T-cell (primary cell): ENCODE measurements at regions of chr10 and their contacts with region 1.

Region 1: GRCh38 chr10:71569775-71570588 is 149.6 kb downstream of the C10orf105 start:
- DNase-seq: peak; percentile 28 to 81 (median 67)
- ATAC-seq: peak in 2 of 4 experiments; percentile 60 to 65
- H3K4me3 ChIP-seq: no peak overlapping the region
- H3K4me3 Mint-ChIP-seq: no peak overlapping the region
- H3K27ac ChIP-seq: no peak overlapping the region
- H3K27ac Mint-ChIP-seq: no peak overlapping the region
- H3K4me1 ChIP-seq: no peaks in the 10 kb centered on the region
- H3K4me1 Mint-ChIP-seq: no peaks in the 10 kb centered on the region
- H3K27me3 ChIP-seq: peaks cover 0 to 14% of the 10 kb centered on the region in 2 experiments
- H3K27me3 Mint-ChIP-seq: no peaks in the 10 kb centered on the region

Region 2: GRCh38 chr10:71314028-71314693 is 255.8 kb before region 1 on chr10:
- CTCF ChIA-PET with region 1: interaction called, 10 to 12 read pairs
- POLR2A ChIA-PET with region 1: no interaction called
- DNase-seq: peak in 32 of 35 experiments; percentile 20 to 82 (median 42)
- ATAC-seq: peak; percentile 33 to 42 (median 39)
- H3K4me3 ChIP-seq: no peak overlapping the region
- H3K4me3 Mint-ChIP-seq: no peak overlapping the region
- H3K27ac ChIP-seq: no peak overlapping the region
- H3K27ac Mint-ChIP-seq: no peak overlapping the region
- H3K4me1 ChIP-seq: peaks cover 0 to 15% of the 10 kb centered on the region in 2 experiments
- H3K4me1 Mint-ChIP-seq: peaks cover 0 to 12% (median 6%) of the 10 kb centered on the region in 3 donors
- H3K27me3 ChIP-seq: peaks cover 0 to 9% of the 10 kb centered on the region in 2 experiments
- H3K27me3 Mint-ChIP-seq: peaks cover 11 to 17% of the 10 kb centered on the region in 2 donors